Caco-2 (cell line): ENCODE measurements at regions of chr16 and their contacts with region 1.

Region 1: DNA sequence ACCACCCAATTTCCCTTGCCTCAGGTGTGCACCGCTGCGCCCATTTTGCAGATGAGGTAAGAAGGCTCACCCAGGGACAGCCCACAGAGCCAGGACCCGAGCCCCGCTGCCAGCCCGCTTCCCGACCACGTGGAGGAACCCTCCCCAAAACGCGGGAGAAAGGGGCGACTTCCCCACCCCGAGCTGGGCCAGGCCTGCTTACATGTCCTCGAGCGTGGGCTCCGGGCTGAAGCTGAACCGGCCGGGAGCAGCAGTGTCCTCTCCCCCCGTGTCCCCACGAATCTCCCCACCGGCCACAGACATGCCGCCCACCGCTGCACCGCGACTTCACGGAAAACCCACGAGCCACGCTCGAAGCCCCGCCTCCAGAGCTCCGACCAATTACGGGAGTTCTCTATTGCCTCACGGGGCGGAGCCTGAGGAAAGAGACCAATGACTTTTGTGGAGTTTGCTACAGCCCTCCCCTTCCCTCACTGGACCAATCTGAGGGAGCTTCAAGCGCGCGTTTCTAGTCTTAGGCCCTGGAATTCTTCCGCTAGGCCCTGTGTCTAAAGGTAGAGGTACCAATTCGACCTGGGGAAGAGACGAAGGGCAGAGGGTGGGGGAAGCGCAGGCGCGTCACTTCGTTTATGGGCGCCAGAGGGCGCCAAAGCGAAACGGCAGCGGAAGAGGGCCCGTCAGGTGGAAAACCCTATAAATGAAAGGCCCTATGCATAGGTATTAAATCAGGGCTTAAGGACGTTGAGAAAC is at the start of gene DCTPP1:
- DNase-seq: peak; percentile 94 to 98
- H3K4me3 ChIP-seq: peak within 1 kb of the TSS; percentile 67
- H3K4me3 Mint-ChIP-seq: no peak within 1 kb of the TSS
- H3K27ac Mint-ChIP-seq: no peak within 1 kb of the TSS
- H3K4me1 ChIP-seq: peaks cover 16% of the 10 kb centered on the region
- H3K4me1 Mint-ChIP-seq: no peaks in the 10 kb centered on the region
- H3K27me3 ChIP-seq: no peaks in the 10 kb centered on the region
- H3K27me3 Mint-ChIP-seq: no peaks in the 10 kb centered on the region
- CTCF ChIP-seq: peak; percentile 79 to 81
- total RNA-seq, gene DCTPP1: 51.1 and 53.2 TPM in 2 replicates

Region 2: GRCh38 chr16:30335598-30336474 is 94.0 kb before region 1 on chr16:
- CTCF ChIA-PET with region 1: no interaction called
- POLR2A ChIA-PET with region 1: no interaction called
- intact Hi-C with region 1: no loop called
- DNase-seq: peak in 1 of 2 experiments; percentile 48
- H3K4me3 ChIP-seq: peak overlapping the region; percentile 46
- H3K4me3 Mint-ChIP-seq: peak overlapping the region; percentile 93
- H3K27ac Mint-ChIP-seq: peak overlapping the region; percentile 94
- H3K4me1 ChIP-seq: no peaks in the 10 kb centered on the region
- H3K4me1 Mint-ChIP-seq: peaks cover 8% of the 10 kb centered on the region
- H3K27me3 ChIP-seq: no peaks in the 10 kb centered on the region
- H3K27me3 Mint-ChIP-seq: no peaks in the 10 kb centered on the region
- CTCF ChIP-seq: peak in 1 of 2 experiments; percentile 26

Region 3: DNA sequence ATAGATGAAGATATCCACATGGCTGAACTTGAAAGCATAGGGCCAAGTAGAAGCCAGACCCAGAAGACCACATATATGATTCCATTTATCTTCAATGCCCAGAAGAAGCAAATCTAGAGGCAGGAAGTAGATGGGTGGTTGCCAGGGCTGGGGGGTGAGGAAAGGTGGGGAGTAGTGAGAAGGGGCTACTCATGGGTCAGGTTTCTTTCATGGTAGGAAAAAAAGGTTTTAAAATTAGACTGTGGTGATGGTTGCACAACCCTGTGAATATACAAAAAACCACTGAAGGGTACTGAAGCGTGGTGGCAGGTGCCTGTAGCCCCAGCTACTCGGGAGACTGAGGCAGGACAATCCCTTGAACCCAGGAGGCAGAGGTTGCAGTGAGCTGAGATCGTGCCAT is 80.2 kb before region 1 on chr16:
- CTCF ChIA-PET with region 1: no interaction called
- POLR2A ChIA-PET with region 1: no interaction called
- intact Hi-C with region 1: no loop called
- DNase-seq: no peak
- H3K4me3 ChIP-seq: no peak overlapping the region
- H3K4me3 Mint-ChIP-seq: no peak overlapping the region
- H3K27ac Mint-ChIP-seq: no peak overlapping the region
- H3K4me1 ChIP-seq: no peaks in the 10 kb centered on the region
- H3K4me1 Mint-ChIP-seq: no peaks in the 10 kb centered on the region
- H3K27me3 ChIP-seq: no peaks in the 10 kb centered on the region
- H3K27me3 Mint-ChIP-seq: no peaks in the 10 kb centered on the region
- CTCF ChIP-seq: no peak

Region 4: GRCh38 chr16:30395155-30395991 is 34.5 kb before region 1 on chr16 and contains the start of gene ZNF48:
- CTCF ChIA-PET with region 1: interaction called, 11 read pairs
- POLR2A ChIA-PET with region 1: interaction called, 7 read pairs
- intact Hi-C with region 1: no loop called
- DNase-seq: peak; percentile 87 to 91
- H3K4me3 ChIP-seq: peak within 1 kb of the TSS; percentile 88
- H3K4me3 Mint-ChIP-seq: peak within 1 kb of the TSS; percentile 82
- H3K27ac Mint-ChIP-seq: peak within 1 kb of the TSS; percentile 46
- H3K4me1 ChIP-seq: peaks cover 6% of the 10 kb centered on the region; the same call in 1 of the 2 replicates
- H3K4me1 Mint-ChIP-seq: peaks cover 19% of the 10 kb centered on the region
- H3K27me3 ChIP-seq: no peaks in the 10 kb centered on the region
- H3K27me3 Mint-ChIP-seq: no peaks in the 10 kb centered on the region
- CTCF ChIP-seq: peak in 1 of 2 experiments; percentile 40
- total RNA-seq, gene ZNF48: 12.8 and 13.4 TPM in 2 replicates

Region 5: DNA sequence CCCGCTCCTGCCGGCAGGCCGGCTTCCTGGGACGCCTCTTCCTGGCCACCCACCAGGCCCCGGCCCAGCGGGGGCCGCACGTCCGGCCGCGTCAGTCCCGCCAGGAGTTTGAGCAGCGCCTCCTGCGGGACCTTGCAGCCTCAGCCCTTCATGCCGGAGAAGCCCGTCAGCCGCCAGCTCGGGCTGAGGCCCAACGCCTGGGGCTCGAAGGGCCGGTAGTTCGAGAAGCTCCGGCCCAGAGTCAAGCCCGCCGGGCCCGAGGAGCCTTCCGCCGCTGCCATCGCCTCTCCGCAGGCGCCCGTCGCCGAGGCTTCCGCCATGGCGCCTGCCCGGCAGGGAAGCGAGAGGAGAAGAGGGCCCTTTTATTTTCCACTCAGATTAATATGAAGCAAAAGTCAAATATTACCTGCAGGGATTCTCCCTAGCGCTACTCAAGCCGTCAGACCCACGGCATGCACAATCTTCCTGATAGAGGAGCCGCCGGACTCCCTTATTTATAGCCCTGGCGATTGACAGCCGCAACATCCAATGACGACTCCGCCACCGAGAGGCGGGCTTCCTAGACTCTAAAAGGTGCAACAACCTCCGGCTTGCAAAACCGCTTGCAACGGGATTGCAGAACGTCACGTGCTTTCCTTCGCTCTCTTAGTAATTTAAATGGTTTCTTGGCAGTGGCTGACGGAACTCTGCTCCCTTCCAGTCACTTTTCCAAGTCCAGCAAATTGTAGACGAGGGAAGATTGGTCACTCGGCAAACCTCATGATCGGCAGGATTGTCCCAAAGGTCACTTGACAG is 15.8 kb after region 1 on chr16 and contains the start of gene SEPHS2:
- CTCF ChIA-PET with region 1: interaction called, 17 read pairs
- POLR2A ChIA-PET with region 1: no interaction called
- intact Hi-C with region 1: no loop called
- DNase-seq: peak; percentile 96 to 98
- H3K4me3 ChIP-seq: peak within 1 kb of the TSS; percentile 80
- H3K4me3 Mint-ChIP-seq: peak within 1 kb of the TSS; percentile 87
- H3K27ac Mint-ChIP-seq: peak within 1 kb of the TSS; percentile 98
- H3K4me1 ChIP-seq: peaks cover 29% of the 10 kb centered on the region
- H3K4me1 Mint-ChIP-seq: peaks cover 13% of the 10 kb centered on the region
- H3K27me3 ChIP-seq: no peaks in the 10 kb centered on the region
- H3K27me3 Mint-ChIP-seq: no peaks in the 10 kb centered on the region
- CTCF ChIP-seq: no peak
- total RNA-seq, gene SEPHS2: 80.2 and 91.6 TPM in 2 replicates

Region 6: GRCh38 chr16:30557957-30558788 is 128.3 kb after region 1 on chr16 and contains the start of gene ZNF764:
- CTCF ChIA-PET with region 1: interaction called, 24 read pairs
- POLR2A ChIA-PET with region 1: interaction called, 5 read pairs
- intact Hi-C with region 1: no loop called
- DNase-seq: peak; percentile 96 to 97
- H3K4me3 ChIP-seq: peak within 1 kb of the TSS; percentile 72
- H3K4me3 Mint-ChIP-seq: peak within 1 kb of the TSS; percentile 78
- H3K27ac Mint-ChIP-seq: peak within 1 kb of the TSS; percentile 53
- H3K4me1 ChIP-seq: peaks cover 5% of the 10 kb centered on the region; the same call in 1 of the 2 replicates
- H3K4me1 Mint-ChIP-seq: peaks cover 6% of the 10 kb centered on the region
- H3K27me3 ChIP-seq: no peaks in the 10 kb centered on the region
- H3K27me3 Mint-ChIP-seq: no peaks in the 10 kb centered on the region
- CTCF ChIP-seq: no peak
- total RNA-seq, gene ZNF764: 8.5 and 10.9 TPM in 2 replicates

Region 7: GRCh38 chr16:30602616-30603277 is 172.9 kb after region 1 on chr16:
- CTCF ChIA-PET with region 1: interaction called, 14 read pairs
- POLR2A ChIA-PET with region 1: no interaction called
- intact Hi-C with region 1: loop called (anchors 1 kb)
- DNase-seq: no peak
- H3K4me3 ChIP-seq: no peak overlapping the region
- H3K4me3 Mint-ChIP-seq: no peak overlapping the region
- H3K27ac Mint-ChIP-seq: no peak overlapping the region
- H3K4me1 ChIP-seq: no peaks in the 10 kb centered on the region
- H3K4me1 Mint-ChIP-seq: no peaks in the 10 kb centered on the region
- H3K27me3 ChIP-seq: no peaks in the 10 kb centered on the region
- H3K27me3 Mint-ChIP-seq: no peaks in the 10 kb centered on the region
- CTCF ChIP-seq: no peak

Region 8: GRCh38 chr16:30650369-30651123 is 220.7 kb after region 1 on chr16 and contains the start of gene PRR14:
- CTCF ChIA-PET with region 1: interaction called, 3 read pairs
- POLR2A ChIA-PET with region 1: interaction called, 12 read pairs
- intact Hi-C with region 1: no loop called
- DNase-seq: peak; percentile 98 to 99
- H3K4me3 ChIP-seq: peak within 1 kb of the TSS; percentile 80
- H3K4me3 Mint-ChIP-seq: peak within 1 kb of the TSS; percentile 86
- H3K27ac Mint-ChIP-seq: peak within 1 kb of the TSS; percentile 78
- H3K4me1 ChIP-seq: peaks cover 3% of the 10 kb centered on the region; the same call in 1 of the 2 replicates
- H3K4me1 Mint-ChIP-seq: peaks cover 12% of the 10 kb centered on the region
- H3K27me3 ChIP-seq: no peaks in the 10 kb centered on the region
- H3K27me3 Mint-ChIP-seq: no peaks in the 10 kb centered on the region
- CTCF ChIP-seq: peak; percentile 1 to 36
- total RNA-seq, gene PRR14: 26.3 and 28.2 TPM in 2 replicates